Cardiac septum (tissue), 1 donor: ENCODE measurements at regions of chr4 and their contacts with region 1.

Region 1: GRCh38 chr4:121656269-121656641 is 40.5 kb downstream of the ANXA5 start:
- DNase-seq: no peak

Region 2: DNA sequence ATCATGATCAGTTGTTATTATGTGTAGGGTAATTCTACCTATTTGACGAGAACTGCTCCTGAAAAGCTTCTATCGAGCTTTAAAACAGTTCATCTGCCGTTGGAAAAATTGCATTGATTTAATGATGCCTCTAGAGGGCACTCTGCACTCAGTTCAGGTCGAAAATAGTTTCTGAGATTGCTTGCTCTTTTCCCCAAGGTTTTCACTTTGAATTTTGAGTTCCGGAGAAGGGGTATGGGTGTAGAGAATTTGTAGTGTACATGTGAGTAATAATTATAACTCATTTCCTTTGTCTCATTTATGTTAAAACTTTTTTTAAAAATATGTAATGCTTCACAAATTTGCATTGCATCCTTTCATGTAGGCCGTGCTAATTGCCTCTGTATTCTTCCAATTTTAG is 463.8 kb before region 1 on chr4:
- intact Hi-C with region 1: loop called (anchors 5 kb)
- DNase-seq: no peak

Region 3: DNA sequence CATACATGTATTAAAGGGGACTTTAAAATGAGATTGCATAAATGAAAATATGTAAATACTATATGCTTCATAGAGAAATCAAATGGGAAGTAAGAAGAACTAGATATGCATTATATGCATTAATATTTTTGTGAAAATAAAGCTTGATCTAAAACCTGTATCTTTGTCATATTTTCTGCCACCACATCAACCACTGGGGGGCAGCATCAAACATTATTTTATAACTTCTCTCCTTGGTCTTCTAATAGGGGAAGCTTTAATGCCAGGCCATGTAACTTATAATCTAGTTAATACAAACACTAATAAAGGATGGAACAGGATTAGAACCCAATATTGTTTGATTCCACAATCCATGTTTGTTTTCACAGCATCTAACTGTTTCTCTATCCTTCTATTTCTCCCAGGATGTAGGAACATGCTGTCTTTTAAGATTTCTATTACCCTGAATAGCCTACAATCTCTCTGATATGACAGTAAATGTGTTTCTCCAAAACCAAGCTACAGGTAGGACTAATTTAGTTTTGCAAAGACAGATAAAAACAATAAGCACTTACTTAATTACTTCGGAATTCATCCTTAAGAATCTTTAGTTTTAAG is 285.4 kb before region 1 on chr4:
- intact Hi-C with region 1: loop called (anchors 5 kb)
- DNase-seq: no peak

Region 4: DNA sequence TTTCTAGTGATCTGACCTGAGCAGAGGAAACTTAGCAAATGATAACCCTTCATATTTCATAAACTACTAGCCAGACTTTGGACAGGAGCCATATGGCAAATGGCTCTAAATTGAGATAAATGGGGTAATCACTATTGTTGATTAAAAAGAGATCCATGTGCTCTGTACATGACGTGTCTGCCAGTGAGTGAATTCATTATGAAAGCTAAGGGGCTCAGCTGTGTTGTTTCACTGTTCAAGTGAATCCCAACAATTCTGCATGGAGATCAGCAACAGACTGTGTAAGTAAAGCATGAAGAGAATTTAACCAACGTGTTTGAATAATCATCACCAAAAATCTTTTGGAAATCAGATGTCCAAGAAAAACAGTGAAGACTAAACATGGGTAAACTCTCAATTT is 265.9 kb before region 1 on chr4:
- intact Hi-C with region 1: no loop called
- DNase-seq: no peak

Region 5: GRCh38 chr4:121462660-121463261 is 193.5 kb before region 1 on chr4:
- intact Hi-C with region 1: loop called (anchors 2 kb)
- DNase-seq: no peak

Region 6: GRCh38 chr4:121484633-121485032 is 171.6 kb before region 1 on chr4:
- intact Hi-C with region 1: loop called (anchors 5 kb)
- DNase-seq: no peak

Region 7: DNA sequence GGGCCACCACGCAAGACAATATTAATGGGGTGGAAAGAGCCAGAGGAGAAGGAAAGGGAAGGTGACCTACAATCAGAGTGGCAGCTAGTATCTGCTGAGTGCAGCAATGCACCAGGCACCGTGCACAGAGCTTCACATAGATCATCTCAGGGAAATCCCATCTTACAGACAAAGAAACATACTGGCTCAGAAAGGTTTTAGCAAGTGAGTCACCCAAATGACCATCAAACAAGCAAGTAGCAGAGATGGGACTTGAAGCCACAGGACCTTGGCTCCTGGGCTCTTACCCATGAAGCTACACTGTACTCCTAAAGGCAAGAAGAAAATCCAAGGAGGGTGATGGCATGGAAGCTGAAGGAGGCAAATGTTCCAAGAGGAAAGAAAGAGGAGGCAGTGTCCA is 33.7 kb after region 1 on chr4:
- intact Hi-C with region 1: no loop called
- DNase-seq: no peak